ENCODE measurements at regions of chr6 and their contacts with region 1.

Region 1: DNA sequence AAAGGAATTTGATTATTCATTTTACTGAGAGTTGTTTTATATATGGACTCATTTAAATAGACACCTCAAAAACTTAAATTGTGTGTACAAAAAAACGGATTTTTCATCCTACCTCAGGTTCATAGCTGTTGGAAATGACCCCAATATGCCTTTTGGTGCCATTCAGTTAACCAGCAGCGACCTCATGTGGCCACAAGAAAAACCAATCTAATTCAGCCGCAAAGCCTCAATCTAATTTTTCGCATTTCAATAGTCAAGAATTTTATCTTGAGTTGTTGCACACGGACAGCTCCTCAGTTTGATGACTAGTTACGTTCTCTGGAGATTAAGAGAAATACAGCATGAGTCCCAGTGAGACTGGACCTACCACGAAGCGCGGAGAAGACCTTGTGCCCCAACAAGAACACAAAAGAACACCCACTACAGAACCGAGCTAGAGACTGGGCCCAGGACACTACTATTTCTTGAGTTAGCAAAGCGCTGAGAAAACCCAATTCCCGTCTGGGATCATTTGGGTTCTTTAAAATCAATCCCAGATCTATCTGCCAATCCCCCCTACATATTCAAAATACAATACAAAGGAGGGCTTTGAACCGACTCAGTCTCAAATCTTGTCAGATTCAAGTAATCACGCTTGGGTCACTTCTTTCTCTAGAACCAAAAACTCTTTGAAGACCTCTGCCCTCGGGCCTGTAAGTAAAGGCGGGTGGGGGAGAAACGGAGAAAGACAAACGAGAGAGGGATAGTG is 1.1 kb downstream of the TCP11 start:
- DNase-seq: peak; percentile 56
- H3K4me3 ChIP-seq: no peak overlapping the region
- H3K27ac ChIP-seq: no peak overlapping the region
- H3K27me3 ChIP-seq: no peaks in the 10 kb centered on the region
- CTCF ChIP-seq: peak; percentile 80

Region 2: GRCh38 chr6:34887753-34888513 is 252.1 kb before region 1 on chr6 and contains the start of gene TAF11:
- CTCF ChIA-PET with region 1: interaction called, 22 read pairs
- POLR2A ChIA-PET with region 1: no interaction called
- DNase-seq: peak; percentile 76
- H3K4me3 ChIP-seq: peak within 1 kb of the TSS; percentile 73
- H3K27ac ChIP-seq: peak within 1 kb of the TSS; percentile 84
- H3K27me3 ChIP-seq: no peaks in the 10 kb centered on the region
- CTCF ChIP-seq: no peak
- polyA plus RNA-seq, gene TAF11: 29.1 and 35.4 TPM in 2 replicates

Region 3: GRCh38 chr6:34986845-34987246 is 153.2 kb before region 1 on chr6:
- CTCF ChIA-PET with region 1: interaction called, 178 read pairs
- POLR2A ChIA-PET with region 1: no interaction called
- DNase-seq: peak; percentile 65
- H3K4me3 ChIP-seq: no peak overlapping the region
- H3K27ac ChIP-seq: no peak overlapping the region
- H3K27me3 ChIP-seq: no peaks in the 10 kb centered on the region
- CTCF ChIP-seq: peak; percentile 72

Region 4: GRCh38 chr6:35089935-35090505 is 50.1 kb before region 1 on chr6:
- CTCF ChIA-PET with region 1: interaction called, 18 read pairs
- POLR2A ChIA-PET with region 1: no interaction called
- DNase-seq: peak; percentile 42
- H3K4me3 ChIP-seq: no peak overlapping the region
- H3K27ac ChIP-seq: peak overlapping the region; percentile 3
- H3K27me3 ChIP-seq: no peaks in the 10 kb centered on the region
- CTCF ChIP-seq: no peak

Region 5: DNA sequence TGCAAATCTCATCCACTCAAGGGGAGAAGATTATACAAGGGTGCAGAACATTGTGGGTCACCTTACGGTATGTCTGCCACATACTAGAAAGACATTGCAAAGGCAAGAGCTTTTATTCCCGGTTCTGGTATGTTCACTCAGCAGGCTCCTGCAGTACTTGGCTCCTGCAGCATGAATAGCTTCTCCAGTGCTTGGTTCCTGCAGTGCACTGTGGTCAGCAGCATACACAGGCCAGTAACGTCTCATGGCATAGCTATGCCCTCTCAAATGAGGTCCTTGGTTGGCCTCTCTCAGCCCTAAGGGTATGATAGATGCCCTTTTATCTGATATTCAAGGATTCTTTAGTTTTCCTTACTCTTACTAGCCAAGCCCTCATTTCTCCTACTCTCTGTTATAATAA is 11.6 kb before region 1 on chr6:
- CTCF ChIA-PET with region 1: interaction called, 15 read pairs
- POLR2A ChIA-PET with region 1: no interaction called
- DNase-seq: no peak
- H3K4me3 ChIP-seq: no peak overlapping the region
- H3K27ac ChIP-seq: no peak overlapping the region
- H3K27me3 ChIP-seq: peaks cover 12% of the 10 kb centered on the region
- CTCF ChIP-seq: no peak

Region 6: DNA sequence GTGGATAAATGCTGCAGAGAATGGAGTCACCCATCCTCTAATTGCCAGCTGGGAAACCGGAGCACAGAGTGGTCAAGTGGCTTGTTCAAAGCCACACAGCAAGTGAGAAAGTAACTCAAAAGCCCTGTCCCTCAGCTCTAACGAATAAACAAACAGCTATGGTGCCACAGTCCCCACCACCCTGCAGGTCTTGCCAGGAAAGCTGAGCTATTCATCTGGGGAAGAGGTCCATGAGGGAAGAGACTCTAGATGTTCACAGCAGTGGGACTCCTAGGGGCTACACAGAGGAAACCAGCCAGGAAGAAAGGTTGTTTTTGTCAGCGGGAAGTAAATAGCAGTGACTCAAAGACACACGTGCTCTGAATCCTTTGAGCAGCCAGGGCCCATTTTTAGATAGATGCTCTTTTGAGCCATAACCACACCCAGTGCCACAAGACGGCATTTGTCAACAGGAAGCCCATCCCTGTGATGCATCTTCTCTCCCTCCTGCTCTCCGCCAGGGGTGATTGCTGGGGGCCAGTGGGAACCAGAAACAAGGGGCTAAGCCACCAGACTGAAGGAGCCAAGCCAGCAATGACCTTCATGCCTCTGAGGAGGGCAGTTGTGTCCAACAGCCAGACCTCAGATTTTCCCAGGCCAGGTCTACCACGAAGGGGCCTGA is 33.5 kb after region 1 on chr6:
- CTCF ChIA-PET with region 1: no interaction called
- POLR2A ChIA-PET with region 1: no interaction called
- DNase-seq: no peak
- H3K4me3 ChIP-seq: no peak overlapping the region
- H3K27ac ChIP-seq: no peak overlapping the region
- H3K27me3 ChIP-seq: no peaks in the 10 kb centered on the region
- CTCF ChIP-seq: no peak

Region 7: GRCh38 chr6:35203680-35204079 is 63.6 kb after region 1 on chr6:
- CTCF ChIA-PET with region 1: interaction called, 41 read pairs
- POLR2A ChIA-PET with region 1: no interaction called
- DNase-seq: no peak
- H3K4me3 ChIP-seq: no peak overlapping the region
- H3K27ac ChIP-seq: no peak overlapping the region
- H3K27me3 ChIP-seq: peaks cover 21% of the 10 kb centered on the region
- CTCF ChIP-seq: no peak

Measured in AG04450 (cell line).